ENCODE measurements at regions of chr5 and their contacts with region 1.

Region 1: DNA sequence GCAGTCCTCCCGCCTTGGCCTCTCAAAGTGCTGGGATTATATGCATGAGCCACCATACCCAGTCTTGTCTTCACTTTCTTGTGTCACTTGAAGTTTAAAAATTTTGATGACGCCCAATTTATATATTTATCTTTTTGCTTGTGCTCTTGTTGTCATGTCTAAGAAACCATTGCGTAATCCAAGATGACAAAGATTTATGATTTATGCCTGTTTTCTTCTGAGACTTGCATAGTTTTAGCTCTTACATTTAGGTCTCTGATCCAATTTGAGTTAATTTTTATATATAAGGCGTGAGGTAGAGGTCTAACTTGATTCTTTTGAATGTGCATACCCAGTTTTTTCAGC is 18.6 kb downstream of the ANKHD1 start:
- DNase-seq: no peak
- H3K4me3 Mint-ChIP-seq: no peak overlapping the region
- H3K27ac Mint-ChIP-seq: no peak overlapping the region
- H3K4me1 Mint-ChIP-seq: peaks cover 40% of the 10 kb centered on the region
- H3K27me3 Mint-ChIP-seq: no peaks in the 10 kb centered on the region

Region 2: DNA sequence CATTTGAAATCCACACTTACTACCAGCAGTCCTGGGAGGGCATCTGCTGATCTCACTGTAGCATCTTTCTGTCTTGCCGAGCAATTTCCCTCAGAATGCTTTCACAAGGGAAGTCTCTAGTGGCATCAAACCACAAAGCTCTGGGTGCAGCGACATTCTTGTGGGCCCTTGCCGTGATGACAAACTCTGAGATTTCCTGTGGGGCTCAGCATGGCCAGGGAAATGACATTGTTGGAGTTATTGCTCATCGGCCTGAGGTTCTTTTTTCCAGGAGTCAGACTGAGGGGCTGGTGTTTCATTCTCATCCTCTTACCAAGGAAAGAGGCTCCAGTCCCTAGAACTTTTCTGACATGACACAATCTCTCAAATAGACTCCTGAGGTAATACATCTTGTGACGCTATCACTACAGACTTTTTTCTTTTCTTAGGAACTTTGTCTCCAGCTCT is 168.6 kb before region 1 on chr5:
- intact Hi-C with region 1: no loop called
- DNase-seq: peak; percentile 69
- H3K4me3 Mint-ChIP-seq: peak overlapping the region; percentile 66
- H3K27ac Mint-ChIP-seq: peak overlapping the region; percentile 78
- H3K4me1 Mint-ChIP-seq: peaks cover 58% of the 10 kb centered on the region
- H3K27me3 Mint-ChIP-seq: no peaks in the 10 kb centered on the region

Region 3: GRCh38 chr5:140381972-140382371 is 38.2 kb before region 1 on chr5:
- intact Hi-C with region 1: loop called (anchors 1 kb)
- DNase-seq: no peak
- H3K4me3 Mint-ChIP-seq: no peak overlapping the region
- H3K27ac Mint-ChIP-seq: no peak overlapping the region
- H3K4me1 Mint-ChIP-seq: peaks cover 15% of the 10 kb centered on the region
- H3K27me3 Mint-ChIP-seq: no peaks in the 10 kb centered on the region

Region 4: DNA sequence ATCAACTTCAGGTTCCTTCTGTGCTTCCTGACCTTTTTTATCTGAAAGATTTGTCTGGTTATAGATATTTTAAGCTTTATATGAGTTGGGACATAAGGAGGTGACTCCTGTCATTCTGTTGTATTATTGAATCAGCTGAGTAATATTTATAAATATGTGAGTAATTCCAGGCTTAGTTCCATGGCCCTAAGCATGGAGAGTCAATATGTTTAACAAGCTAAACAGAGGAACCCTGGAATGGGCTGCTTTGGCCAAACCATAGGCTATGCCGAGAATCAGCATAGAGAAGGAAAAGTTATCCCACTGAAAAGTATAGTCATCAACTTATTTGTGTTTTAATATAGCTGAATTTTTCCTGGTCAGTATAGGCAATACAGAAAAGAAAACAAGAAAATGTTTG is 120.0 kb after region 1 on chr5:
- intact Hi-C with region 1: loop called (anchors 2 kb)
- DNase-seq: no peak
- H3K4me3 Mint-ChIP-seq: no peak overlapping the region
- H3K27ac Mint-ChIP-seq: no peak overlapping the region
- H3K4me1 Mint-ChIP-seq: no peaks in the 10 kb centered on the region
- H3K27me3 Mint-ChIP-seq: no peaks in the 10 kb centered on the region

Measured in activated T-helper 1 cell treated with anti-CD3 and anti-CD28 coated beads, Interleukin-12 subunit alpha, Interleukin-12 subunit beta, Interleukin-2, Interleukin-4 antibody, amounts not matched to agents 30 ng/mL and 10 ng/mL and 1 ng/mL, durations not matched to agents 14 hours and 24 hours and 36 hours (primary cell).